ENCODE measurements at regions of chr11 and their contacts with region 1.

Region 1: GRCh38 chr11:123707606-123708205 is 33.8 kb downstream of the ZNF202 start:
- DNase-seq: no peak
- ATAC-seq: no peak

Region 2: DNA sequence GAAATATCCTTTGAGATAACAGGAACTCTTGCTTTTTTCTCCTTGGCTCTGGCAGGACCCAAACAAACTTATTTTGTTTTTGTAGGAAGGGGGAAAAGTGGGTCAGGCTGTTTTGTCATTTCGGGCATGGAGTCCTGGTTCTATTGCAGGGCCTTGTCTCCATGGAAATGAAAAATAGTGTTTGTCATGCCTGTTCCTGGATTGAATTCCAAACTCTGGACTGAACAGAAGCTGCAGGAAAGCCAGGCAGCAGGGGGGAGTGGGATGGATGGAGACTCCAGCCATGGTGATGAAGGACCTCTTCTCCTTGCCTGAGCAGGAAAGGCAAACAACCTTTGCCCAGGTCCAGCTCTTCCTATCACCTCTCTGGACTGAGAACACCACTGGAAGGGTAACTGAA is 140.2 kb before region 1 on chr11:
- intact Hi-C with region 1: no loop called
- DNase-seq: no peak
- ATAC-seq: no peak

Region 3: DNA sequence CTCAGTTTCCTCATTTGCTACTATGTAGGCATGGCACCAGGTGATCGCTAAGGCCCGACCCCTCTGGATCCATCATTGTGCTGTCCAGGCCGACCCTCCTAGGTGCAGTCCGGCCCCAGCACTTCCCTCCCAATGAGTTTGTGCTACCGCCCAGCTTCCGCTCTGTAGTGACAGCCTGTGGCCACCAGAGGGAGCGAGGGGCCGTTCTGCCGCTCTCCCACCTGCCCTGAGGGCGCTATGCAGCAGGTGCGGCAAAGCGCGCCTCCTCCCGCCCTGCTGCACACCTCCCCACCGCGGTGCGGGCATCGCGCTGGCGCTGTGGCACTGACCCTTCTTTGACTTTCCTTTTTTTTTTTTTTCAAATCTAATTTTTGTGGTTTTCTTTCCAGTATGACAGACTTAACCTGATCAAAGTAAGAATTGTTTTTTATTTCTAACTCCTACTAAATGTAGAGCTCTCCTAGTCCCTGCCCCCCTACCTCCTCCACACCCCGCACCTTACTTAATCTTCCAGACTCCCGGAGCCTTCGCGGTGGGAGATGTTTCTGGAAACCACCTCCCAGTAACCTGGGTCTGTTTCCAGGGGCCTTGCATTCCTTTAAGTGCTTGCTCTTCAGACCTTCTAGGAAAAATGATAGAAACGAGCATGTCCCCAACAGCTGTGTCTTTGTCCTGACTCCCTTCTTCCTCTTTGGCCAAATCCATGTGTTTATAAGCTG is 127.0 kb before region 1 on chr11:
- intact Hi-C with region 1: loop called (anchors 5 kb)
- DNase-seq: peak; percentile 72
- ATAC-seq: peak; percentile 29

Measured in sciatic nerve (tissue), 2 donors.